Activated CD4-positive, alpha-beta memory T cell treated with anti-CD3 and anti-CD28 coated beads for 36 hours (primary cell): ENCODE measurements at regions of chr4 and their contacts with region 1.

Region 1: GRCh38 chr4:128287871-128288688 is 467 bp upstream of the PGRMC2 start:
- DNase-seq: peak; percentile 100
- H3K4me3 Mint-ChIP-seq: peak overlapping the region; percentile 93
- H3K27ac Mint-ChIP-seq: peak overlapping the region; percentile 88
- H3K4me1 Mint-ChIP-seq: peaks cover 31% of the 10 kb centered on the region
- H3K27me3 Mint-ChIP-seq: no peaks in the 10 kb centered on the region

Region 2: GRCh38 chr4:127782274-127783025 is 505.6 kb before region 1 on chr4 and contains the start of gene HSPA4L:
- CTCF ChIA-PET with region 1: no interaction called
- POLR2A ChIA-PET with region 1: no interaction called
- intact Hi-C with region 1: loop called (anchors 1 kb)
- DNase-seq: no peak
- H3K4me3 Mint-ChIP-seq: peak within 1 kb of the TSS; percentile 79
- H3K27ac Mint-ChIP-seq: peak within 1 kb of the TSS; percentile 49
- H3K4me1 Mint-ChIP-seq: peaks cover 18% of the 10 kb centered on the region
- H3K27me3 Mint-ChIP-seq: peaks cover 51% of the 10 kb centered on the region
- total RNA-seq, gene HSPA4L: 1.9 to 3.0 TPM

Region 3: GRCh38 chr4:127965062-127965802 is 322.8 kb before region 1 on chr4 and contains the starts of genes ABHD18 and MFSD8:
- CTCF ChIA-PET with region 1: interaction called, 3 read pairs
- POLR2A ChIA-PET with region 1: interaction called, 10 read pairs
- intact Hi-C with region 1: loop called (anchors 1 kb)
- DNase-seq: peak; percentile 100
- H3K4me3 Mint-ChIP-seq: peak within 1 kb of the TSS; percentile 94
- H3K27ac Mint-ChIP-seq: peak within 1 kb of the TSS; percentile 95
- H3K4me1 Mint-ChIP-seq: peaks cover 38% of the 10 kb centered on the region
- H3K27me3 Mint-ChIP-seq: no peaks in the 10 kb centered on the region
- total RNA-seq, gene ABHD18: 17.3 to 18.9 TPM
- total RNA-seq, gene MFSD8: 13.0 to 15.3 TPM

Region 4: GRCh38 chr4:128191115-128191781 is 96.8 kb before region 1 on chr4:
- CTCF ChIA-PET with region 1: no interaction called
- POLR2A ChIA-PET with region 1: no interaction called
- intact Hi-C with region 1: loop called (anchors 2 kb)
- DNase-seq: peak; percentile 80
- H3K4me3 Mint-ChIP-seq: no peak overlapping the region
- H3K27ac Mint-ChIP-seq: no peak overlapping the region
- H3K4me1 Mint-ChIP-seq: peaks cover 3% of the 10 kb centered on the region
- H3K27me3 Mint-ChIP-seq: no peaks in the 10 kb centered on the region

Region 5: GRCh38 chr4:128308986-128309385 is 20.9 kb after region 1 on chr4:
- CTCF ChIA-PET with region 1: no interaction called
- POLR2A ChIA-PET with region 1: no interaction called
- intact Hi-C with region 1: no loop called
- DNase-seq: no peak
- H3K4me3 Mint-ChIP-seq: no peak overlapping the region
- H3K27ac Mint-ChIP-seq: no peak overlapping the region
- H3K4me1 Mint-ChIP-seq: no peaks in the 10 kb centered on the region
- H3K27me3 Mint-ChIP-seq: no peaks in the 10 kb centered on the region

Region 6: GRCh38 chr4:128513664-128514484 is 225.8 kb after region 1 on chr4:
- CTCF ChIA-PET with region 1: no interaction called
- POLR2A ChIA-PET with region 1: no interaction called
- intact Hi-C with region 1: loop called (anchors 1 kb)
- DNase-seq: no peak
- H3K4me3 Mint-ChIP-seq: peak overlapping the region; percentile 55
- H3K27ac Mint-ChIP-seq: peak overlapping the region; percentile 38
- H3K4me1 Mint-ChIP-seq: peaks cover 16% of the 10 kb centered on the region
- H3K27me3 Mint-ChIP-seq: no peaks in the 10 kb centered on the region

Region 7: DNA sequence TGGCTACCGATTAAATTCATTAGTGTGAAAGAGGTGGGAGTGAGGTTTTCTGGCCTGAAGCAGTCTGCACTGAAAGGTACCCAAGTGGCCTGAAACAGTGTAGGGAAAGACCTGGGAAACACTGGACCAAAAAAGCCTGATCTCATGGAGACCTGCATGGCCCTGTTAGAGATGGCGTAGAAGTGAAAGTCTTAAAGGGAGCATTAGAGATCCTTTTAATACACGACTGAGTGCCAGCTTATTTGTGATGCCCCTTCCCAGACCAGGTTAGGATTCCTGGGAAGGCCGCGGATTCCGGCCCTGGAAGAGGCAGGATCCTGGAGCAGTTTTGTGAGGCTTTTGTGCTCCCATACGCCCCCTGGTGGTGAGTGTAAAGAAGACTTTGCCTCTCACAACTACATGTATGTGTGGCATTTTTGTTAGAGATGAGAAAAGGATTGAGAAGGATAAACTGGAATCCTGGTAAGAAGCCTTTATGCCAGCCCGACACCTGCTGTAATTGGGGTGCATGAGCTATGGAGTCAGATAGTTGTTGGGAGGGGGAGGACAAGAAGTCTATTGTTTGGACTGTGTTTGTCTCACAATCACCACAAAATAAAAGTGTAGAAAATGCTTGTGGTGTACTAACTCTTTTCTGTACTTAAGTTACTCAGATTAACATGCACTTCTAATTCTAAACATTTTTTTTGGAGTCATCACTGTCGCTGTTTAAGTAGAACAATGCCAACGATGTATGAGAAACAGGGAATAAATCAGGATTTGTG is 575.4 kb after region 1 on chr4:
- CTCF ChIA-PET with region 1: no interaction called
- POLR2A ChIA-PET with region 1: no interaction called
- intact Hi-C with region 1: loop called (anchors 5 kb)
- DNase-seq: peak; percentile 69
- H3K4me3 Mint-ChIP-seq: no peak overlapping the region
- H3K27ac Mint-ChIP-seq: peak overlapping the region; percentile 83
- H3K4me1 Mint-ChIP-seq: peaks cover 46% of the 10 kb centered on the region
- H3K27me3 Mint-ChIP-seq: no peaks in the 10 kb centered on the region